Activated CD4-positive, alpha-beta memory T cell treated with anti-CD3 and anti-CD28 coated beads, Interleukin-2, amount 10 ng/mL, durations not matched to agents 7 days and 5 days (primary cell): ENCODE measurements at regions of chr17 and their contacts with region 1.

Region 1: DNA sequence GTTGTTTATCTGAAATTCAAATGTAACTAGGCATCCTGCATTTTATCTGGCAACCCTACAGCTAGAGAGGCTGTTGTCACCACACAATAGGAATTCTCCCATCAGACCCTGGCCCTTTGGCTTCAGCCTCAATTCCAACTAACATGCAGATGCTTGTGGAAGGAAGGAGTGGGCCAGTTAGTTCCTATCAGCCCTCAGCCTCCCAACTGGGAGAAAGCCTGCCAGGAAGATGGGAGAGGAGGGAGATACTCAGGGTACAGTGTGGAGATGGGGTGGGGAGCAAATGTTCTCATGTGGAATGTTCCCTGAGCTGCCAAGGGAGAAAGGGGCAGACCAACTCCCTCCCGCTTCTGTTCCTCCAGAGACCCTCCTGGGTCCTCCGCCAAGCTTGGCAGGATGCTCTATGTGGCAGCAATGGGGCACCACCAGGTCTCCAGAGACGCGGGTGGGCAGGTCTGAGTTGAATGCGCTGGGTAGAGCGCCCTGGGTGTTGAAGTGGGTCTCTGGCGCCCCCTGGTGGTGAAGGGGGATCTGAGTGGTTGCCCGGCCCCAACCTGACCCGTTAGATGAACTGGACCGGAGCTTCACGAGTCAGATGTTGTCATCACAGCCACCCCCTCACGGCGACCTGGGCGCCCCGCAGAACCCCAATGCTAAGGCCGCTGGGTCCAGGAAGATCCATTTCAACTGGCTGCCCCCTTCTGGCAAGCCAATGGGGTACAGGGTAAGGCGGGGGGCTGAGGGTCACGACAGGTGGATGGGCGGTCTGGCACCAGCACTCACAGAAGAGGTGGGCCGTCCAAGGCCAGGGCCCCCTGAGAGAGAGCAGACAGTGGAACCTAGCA is 15.2 kb downstream of the GALK1 start:
- DNase-seq: peak; percentile 88
- H3K4me3 Mint-ChIP-seq: no peak overlapping the region
- H3K27ac Mint-ChIP-seq: no peak overlapping the region
- H3K4me1 Mint-ChIP-seq: peaks cover 19% of the 10 kb centered on the region
- H3K27me3 Mint-ChIP-seq: peaks cover 9% of the 10 kb centered on the region

Region 2: DNA sequence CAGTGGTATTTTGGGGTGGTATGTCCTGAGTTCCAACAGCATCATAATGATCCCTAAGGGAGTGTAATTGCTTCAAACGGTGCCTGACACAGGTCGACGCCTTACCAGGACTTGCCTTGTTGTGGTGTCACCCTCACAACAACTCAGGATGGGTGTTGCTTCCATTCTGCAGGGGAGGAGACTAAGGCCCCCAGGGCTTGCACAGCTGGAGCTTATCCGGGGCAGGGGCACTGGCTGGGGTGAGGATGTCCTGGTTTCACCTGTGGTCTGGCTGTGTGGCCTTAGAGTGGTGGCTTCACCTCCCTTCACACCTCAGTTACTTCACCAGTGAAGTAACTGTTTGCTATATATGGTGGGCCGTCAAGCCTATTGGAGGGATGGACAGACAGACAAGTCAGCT is 201.0 kb before region 1 on chr17:
- CTCF ChIA-PET with region 1: no interaction called
- POLR2A ChIA-PET with region 1: no interaction called
- DNase-seq: no peak
- H3K4me3 Mint-ChIP-seq: no peak overlapping the region
- H3K27ac Mint-ChIP-seq: no peak overlapping the region
- H3K4me1 Mint-ChIP-seq: peaks cover 2% of the 10 kb centered on the region
- H3K27me3 Mint-ChIP-seq: no peaks in the 10 kb centered on the region

Region 3: DNA sequence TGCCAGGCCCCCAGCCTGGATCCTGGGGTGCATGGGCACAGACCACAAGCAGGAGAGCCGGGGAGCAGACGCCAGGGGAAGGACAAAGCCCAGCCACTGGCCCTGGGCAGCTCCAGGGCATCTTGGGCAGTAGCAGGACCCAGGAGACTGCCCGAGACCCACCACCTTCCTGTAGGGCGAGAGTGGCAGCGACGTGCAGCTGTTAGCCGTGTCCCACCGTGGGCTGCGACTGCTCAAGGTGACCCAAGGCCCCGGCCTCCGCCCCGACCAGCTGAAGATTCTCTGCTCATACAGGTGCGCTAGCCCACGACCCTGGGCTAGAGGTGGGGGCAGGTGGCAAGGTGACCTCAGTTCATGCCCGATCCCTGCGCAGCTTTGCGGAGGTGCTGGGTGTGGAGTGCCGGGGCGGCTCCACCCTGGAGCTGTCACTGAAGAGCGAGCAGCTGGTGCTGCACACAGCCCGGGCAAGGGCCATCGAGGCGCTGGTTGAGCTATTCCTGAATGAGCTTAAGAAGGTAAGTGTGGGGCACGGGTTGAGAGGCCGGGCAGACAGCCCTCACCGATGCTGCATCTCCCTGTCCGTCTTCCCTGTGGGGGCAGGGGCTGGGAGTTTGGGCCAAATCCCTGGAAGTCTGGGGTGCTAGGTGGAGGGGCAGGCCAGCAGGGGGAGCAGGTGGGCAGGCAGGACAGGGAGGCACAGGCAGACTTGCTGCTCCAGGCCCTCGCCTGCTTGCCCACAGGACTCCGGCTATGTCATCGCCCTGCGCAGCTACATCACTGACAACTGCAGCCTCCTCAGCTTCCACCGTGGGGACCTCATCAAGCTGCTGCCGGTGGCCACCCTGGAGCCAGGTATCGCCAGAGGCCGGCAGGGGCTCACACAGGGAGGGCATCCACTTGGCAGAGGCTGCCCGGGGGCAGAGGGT is 130.0 kb before region 1 on chr17:
- CTCF ChIA-PET with region 1: interaction called, 21 read pairs
- POLR2A ChIA-PET with region 1: no interaction called
- DNase-seq: peak; percentile 29
- H3K4me3 Mint-ChIP-seq: no peak overlapping the region
- H3K27ac Mint-ChIP-seq: no peak overlapping the region
- H3K4me1 Mint-ChIP-seq: no peaks in the 10 kb centered on the region
- H3K27me3 Mint-ChIP-seq: no peaks in the 10 kb centered on the region

Region 4: GRCh38 chr17:75667021-75667790 is 82.6 kb before region 1 on chr17 and contains the starts of genes RECQL5 and SAP30BP:
- CTCF ChIA-PET with region 1: interaction called, 133 read pairs
- POLR2A ChIA-PET with region 1: interaction called, 27 read pairs
- DNase-seq: peak; percentile 98
- H3K4me3 Mint-ChIP-seq: peak within 1 kb of the TSS; percentile 55
- H3K27ac Mint-ChIP-seq: peak within 1 kb of the TSS; percentile 23
- H3K4me1 Mint-ChIP-seq: peaks cover 28% of the 10 kb centered on the region
- H3K27me3 Mint-ChIP-seq: no peaks in the 10 kb centered on the region
- total RNA-seq, gene RECQL5: 38.3 TPM
- total RNA-seq, gene SAP30BP: 87.2 to 89.6 TPM

Region 5: DNA sequence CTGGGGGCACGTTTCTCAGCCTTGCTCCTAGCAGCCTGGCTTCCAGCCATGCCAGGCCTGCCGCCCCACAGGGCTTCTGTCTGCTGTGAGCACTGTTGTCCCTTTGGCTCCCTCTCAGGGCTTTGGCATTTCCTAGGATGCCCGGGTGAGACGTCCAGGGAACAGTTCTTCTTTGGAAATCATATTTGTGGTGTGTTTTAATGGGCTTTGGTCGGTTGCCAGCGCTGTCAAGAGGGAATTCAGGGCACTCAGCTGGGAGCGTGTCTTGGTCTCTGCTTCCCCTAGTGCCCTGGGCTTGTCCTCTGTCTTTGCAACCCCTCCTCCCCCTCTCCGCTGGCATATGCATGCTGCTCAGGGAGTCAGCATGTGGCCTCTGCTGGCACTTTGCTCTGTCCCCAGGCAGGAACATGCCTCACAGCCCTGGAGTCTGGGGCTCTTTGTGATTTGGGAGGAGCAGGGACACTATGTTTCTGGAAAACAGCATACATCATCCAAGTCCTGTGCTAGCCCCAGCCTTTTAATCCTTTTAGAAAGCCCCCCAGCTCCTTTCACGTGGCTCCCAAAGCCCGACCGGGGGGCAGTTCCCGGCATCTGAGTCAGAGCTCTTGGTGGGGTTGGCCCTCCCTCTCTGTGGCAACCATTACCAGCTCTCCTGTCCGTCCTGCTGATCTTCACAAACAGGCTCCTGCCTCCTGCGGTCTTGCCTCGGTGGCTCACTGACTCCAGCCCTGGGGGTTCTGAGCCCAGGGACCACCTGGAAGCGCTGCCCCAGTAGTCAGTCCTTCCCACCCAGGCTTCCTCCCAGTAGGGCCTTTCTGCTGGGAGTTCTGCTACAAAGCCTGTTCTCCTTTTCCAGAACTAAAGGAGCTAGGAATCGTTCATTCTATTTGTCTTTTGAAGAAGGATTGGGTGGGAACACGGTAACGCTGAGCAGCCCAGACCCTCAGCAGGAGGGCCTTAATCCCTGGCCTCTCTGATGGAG is 56.0 kb before region 1 on chr17:
- CTCF ChIA-PET with region 1: interaction called, 37 read pairs
- POLR2A ChIA-PET with region 1: interaction called, 3 read pairs
- DNase-seq: no peak
- H3K4me3 Mint-ChIP-seq: no peak overlapping the region
- H3K27ac Mint-ChIP-seq: no peak overlapping the region
- H3K4me1 Mint-ChIP-seq: peaks cover 31% of the 10 kb centered on the region
- H3K27me3 Mint-ChIP-seq: no peaks in the 10 kb centered on the region

Region 6: DNA sequence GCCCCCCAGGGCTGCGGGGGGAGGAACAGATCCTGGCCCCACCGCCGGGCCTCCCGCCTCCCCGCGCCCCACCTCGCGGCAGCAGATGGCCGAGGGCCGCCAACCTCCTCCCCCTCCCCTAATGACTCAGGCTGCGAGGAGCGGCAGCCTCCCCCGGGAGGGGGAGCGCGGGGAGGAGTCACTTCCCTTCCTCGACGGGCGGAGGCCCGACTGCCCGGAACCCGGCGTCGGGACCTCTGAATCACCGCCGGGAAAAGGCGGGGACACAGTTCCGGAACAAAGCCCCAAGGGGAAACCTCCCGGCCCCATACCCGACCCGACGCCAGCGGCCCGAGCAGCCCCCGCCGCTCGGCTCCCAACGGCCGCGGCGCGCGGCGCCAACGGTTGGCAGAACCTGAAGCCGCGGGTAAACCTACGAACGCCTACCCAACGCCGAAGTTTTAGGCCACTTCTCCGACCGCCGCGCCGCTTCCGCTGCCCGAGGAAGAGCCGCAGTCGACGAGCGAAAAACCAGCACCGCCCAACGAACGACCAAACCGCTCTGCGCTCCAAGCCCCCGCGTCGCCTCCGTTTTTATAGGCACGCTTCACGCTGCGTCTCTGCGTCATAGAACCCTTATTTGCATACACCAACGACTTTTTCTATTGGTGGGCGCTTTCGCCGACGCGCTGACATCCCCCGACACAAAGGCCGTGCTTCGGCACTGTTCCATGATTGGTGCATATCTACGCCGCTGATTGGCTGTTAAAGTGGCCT is 29.6 kb after region 1 on chr17:
- CTCF ChIA-PET with region 1: interaction called, 24 read pairs
- POLR2A ChIA-PET with region 1: interaction called, 39 read pairs
- DNase-seq: peak; percentile 96
- H3K4me3 Mint-ChIP-seq: peak overlapping the region; percentile 88
- H3K27ac Mint-ChIP-seq: peak overlapping the region; percentile 96
- H3K4me1 Mint-ChIP-seq: peaks cover 58% of the 10 kb centered on the region
- H3K27me3 Mint-ChIP-seq: no peaks in the 10 kb centered on the region

Region 7: DNA sequence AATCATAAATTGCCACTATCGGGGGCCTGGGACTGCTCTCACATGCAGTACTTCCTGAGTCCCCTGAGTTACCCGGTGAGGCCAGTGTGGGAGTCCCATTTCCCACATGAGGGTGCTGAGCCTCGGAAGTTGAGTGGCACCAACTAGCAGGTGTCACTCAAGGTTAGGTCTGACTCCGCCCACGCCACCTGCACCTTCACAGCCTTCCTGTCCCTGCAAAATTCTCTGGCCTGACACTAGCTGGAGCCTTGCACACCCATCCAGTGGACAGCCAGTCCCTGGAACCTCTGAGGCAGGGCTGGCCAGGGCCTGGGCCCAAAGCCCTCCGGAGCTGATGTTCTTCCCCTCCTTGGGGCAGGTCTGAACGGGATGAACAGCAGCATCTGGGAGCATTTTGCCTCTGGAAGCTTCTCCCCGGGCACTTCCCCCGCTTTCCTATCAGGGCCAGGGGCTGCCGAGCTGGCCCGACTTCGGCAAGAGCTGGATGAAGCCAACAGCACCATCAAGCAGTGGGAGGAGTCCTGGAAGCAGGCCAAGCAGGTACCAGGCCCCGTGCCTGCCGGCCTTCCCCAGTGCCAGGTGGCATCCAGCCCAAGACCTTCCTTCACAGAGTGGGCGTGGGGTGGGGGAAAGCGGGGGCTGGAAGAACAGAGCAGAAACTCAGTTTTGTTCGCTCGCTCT is 72.5 kb after region 1 on chr17:
- CTCF ChIA-PET with region 1: interaction called, 10 read pairs
- POLR2A ChIA-PET with region 1: no interaction called
- DNase-seq: no peak
- H3K4me3 Mint-ChIP-seq: no peak overlapping the region
- H3K27ac Mint-ChIP-seq: peak overlapping the region; percentile 68
- H3K4me1 Mint-ChIP-seq: peaks cover 28% of the 10 kb centered on the region
- H3K27me3 Mint-ChIP-seq: no peaks in the 10 kb centered on the region

Region 8: GRCh38 chr17:75877752-75878173 is 128.0 kb after region 1 on chr17:
- CTCF ChIA-PET with region 1: interaction called, 10 read pairs
- POLR2A ChIA-PET with region 1: interaction called, 4 read pairs
- DNase-seq: peak; percentile 82
- H3K4me3 Mint-ChIP-seq: peak overlapping the region; percentile 89
- H3K27ac Mint-ChIP-seq: peak overlapping the region; percentile 93
- H3K4me1 Mint-ChIP-seq: peaks cover 63% of the 10 kb centered on the region
- H3K27me3 Mint-ChIP-seq: peaks cover 14% of the 10 kb centered on the region